ENCODE measurements at regions of chr6 and their contacts with region 1.

Region 1: DNA sequence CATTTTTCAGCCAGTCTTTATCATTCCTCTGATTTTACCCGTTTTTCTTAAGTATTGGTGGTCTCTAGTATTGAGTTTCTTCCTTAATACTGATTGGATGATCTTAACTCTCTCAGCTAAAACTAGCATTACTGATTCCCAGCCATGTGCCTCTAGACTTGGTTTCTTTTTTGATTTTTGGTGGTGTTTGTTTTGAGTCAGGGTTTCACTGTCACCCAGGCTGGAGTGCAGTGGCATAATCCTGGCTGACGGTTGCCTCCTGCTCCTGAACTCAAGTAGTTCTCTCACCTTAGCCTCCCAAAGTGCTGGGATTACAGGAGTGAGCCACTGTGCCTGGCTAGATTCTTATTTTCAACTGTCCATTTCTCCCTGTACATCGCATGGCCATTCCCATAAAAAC is 24.9 kb downstream of the DPPA5 start:
- DNase-seq: no peak
- ATAC-seq: no peak
- H3K4me3 ChIP-seq: no peak overlapping the region
- H3K4me3 Mint-ChIP-seq: no peak overlapping the region
- H3K27ac ChIP-seq: no peak overlapping the region
- H3K27ac Mint-ChIP-seq: no peak overlapping the region
- H3K4me1 ChIP-seq: no peaks in the 10 kb centered on the region
- H3K4me1 Mint-ChIP-seq: peaks cover 0 to 6% (median 0%) of the 10 kb centered on the region in 7 donors
- H3K27me3 ChIP-seq: no peaks in the 10 kb centered on the region
- H3K27me3 Mint-ChIP-seq: peaks cover 4 to 42% (median 19%) of the 10 kb centered on the region in 5 donors

Region 2: DNA sequence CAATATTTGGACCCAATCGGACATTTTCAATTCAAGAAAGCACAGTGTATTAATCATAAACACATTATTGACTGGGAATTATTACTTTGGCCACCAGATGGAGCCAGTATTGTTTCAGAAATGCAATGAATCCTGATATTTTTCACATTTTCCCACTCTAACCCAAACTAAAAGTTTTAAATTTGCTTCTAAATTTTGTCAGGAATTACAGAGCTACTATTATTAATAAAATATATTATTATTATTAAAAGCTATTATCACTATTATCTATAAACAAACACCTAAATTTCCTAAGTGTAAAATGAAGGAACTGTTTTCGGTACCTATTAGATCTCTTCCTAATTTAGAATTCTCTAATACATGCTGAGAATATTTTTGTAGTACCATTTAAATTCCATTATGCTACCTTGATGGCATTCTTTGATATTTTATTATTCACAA is 1795.2 kb before region 1 on chr6:
- CTCF ChIA-PET with region 1: no interaction called
- POLR2A ChIA-PET with region 1: no interaction called
- intact Hi-C with region 1: loop called in 1 of 2 experiments (anchors 10 kb)
- DNase-seq: no peak
- ATAC-seq: no peak
- H3K4me3 ChIP-seq: no peak overlapping the region
- H3K4me3 Mint-ChIP-seq: no peak overlapping the region
- H3K27ac ChIP-seq: no peak overlapping the region
- H3K27ac Mint-ChIP-seq: no peak overlapping the region
- H3K4me1 ChIP-seq: no peaks in the 10 kb centered on the region
- H3K4me1 Mint-ChIP-seq: no peaks in the 10 kb centered on the region
- H3K27me3 ChIP-seq: no peaks in the 10 kb centered on the region
- H3K27me3 Mint-ChIP-seq: peaks cover 0 to 12% (median 10%) of the 10 kb centered on the region in 5 donors

Region 3: GRCh38 chr6:72411872-72412708 is 917.1 kb before region 1 on chr6:
- CTCF ChIA-PET with region 1: interaction called, 4 read pairs
- POLR2A ChIA-PET with region 1: no interaction called
- intact Hi-C with region 1: loop called (anchors 1 kb)
- DNase-seq: peak; percentile 61 to 93 (median 79)
- ATAC-seq: peak; percentile 99
- H3K4me3 ChIP-seq: no peak overlapping the region
- H3K4me3 Mint-ChIP-seq: no peak overlapping the region
- H3K27ac ChIP-seq: no peak overlapping the region
- H3K27ac Mint-ChIP-seq: peak overlapping the region in 2 of 9 donors; percentile 15 to 28
- H3K4me1 ChIP-seq: no peaks in the 10 kb centered on the region
- H3K4me1 Mint-ChIP-seq: peaks cover 0 to 2% (median 0%) of the 10 kb centered on the region in 7 donors
- H3K27me3 ChIP-seq: no peaks in the 10 kb centered on the region
- H3K27me3 Mint-ChIP-seq: peaks cover 0 to 13% (median 0%) of the 10 kb centered on the region in 5 donors

Region 4: DNA sequence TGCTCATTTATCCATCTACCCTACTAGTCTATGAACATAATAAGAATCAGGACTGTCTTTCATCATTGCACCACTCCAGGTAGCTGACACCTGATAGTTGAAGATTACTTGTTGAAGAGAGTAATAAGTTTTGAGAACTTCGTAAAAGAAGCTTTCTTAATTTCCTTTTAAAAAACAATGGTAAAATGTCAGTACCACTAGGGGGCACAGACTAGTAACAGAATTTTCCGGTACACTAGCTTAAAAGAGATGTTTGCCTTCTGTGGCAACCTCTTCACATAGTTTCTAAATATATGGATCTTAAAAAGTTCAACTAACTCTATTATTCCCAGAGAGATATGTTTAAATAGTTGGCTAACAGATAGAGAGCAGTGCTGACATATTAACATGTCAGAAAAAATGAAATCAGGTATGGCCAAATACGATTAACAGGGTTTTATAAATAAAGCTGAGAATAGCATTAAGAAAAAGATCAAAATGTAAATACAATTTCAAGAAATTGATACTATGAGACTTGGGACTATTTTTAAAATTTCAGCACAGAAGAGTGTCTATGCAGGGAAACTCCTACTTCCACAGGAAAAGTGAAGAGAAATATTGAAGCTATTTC is 712.7 kb before region 1 on chr6:
- CTCF ChIA-PET with region 1: interaction called, 7 read pairs
- POLR2A ChIA-PET with region 1: interaction called, 4 read pairs
- intact Hi-C with region 1: loop called (anchors 1 to 5 kb)
- DNase-seq: peak in 5 of 9 donors; percentile 40 to 58 (median 49)
- ATAC-seq: no peak
- H3K4me3 ChIP-seq: no peak overlapping the region
- H3K4me3 Mint-ChIP-seq: peak overlapping the region in 4 of 10 donors; percentile 12 to 32 (median 22)
- H3K27ac ChIP-seq: no peak overlapping the region
- H3K27ac Mint-ChIP-seq: peak overlapping the region in 7 of 9 donors; percentile 37 to 80 (median 71)
- H3K4me1 ChIP-seq: peaks cover 18 to 21% of the 10 kb centered on the region in 2 donors
- H3K4me1 Mint-ChIP-seq: peaks cover 23 to 70% (median 52%) of the 10 kb centered on the region in 7 donors
- H3K27me3 ChIP-seq: no peaks in the 10 kb centered on the region
- H3K27me3 Mint-ChIP-seq: no peaks in the 10 kb centered on the region

Region 5: DNA sequence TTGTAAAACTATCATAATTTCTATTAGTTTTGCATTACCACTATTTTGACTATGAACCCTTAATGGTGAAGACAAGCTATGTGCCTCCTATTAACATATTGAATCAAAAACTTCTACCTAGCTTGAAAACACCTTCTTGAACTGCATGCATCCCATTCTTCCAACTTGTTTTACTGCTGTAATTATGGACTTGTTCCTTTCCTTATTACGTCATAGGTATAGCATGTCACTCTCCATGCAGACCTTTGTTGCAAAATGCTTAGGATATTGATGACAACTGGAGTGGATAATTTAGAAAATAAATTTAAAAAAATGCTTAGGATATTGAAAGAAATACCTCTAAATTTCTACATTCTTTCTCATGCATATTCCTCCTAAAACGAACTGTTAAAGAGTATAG is 488.0 kb before region 1 on chr6:
- CTCF ChIA-PET with region 1: no interaction called
- POLR2A ChIA-PET with region 1: no interaction called
- intact Hi-C with region 1: no loop called
- DNase-seq: no peak
- ATAC-seq: no peak
- H3K4me3 ChIP-seq: no peak overlapping the region
- H3K4me3 Mint-ChIP-seq: no peak overlapping the region
- H3K27ac ChIP-seq: no peak overlapping the region
- H3K27ac Mint-ChIP-seq: no peak overlapping the region
- H3K4me1 ChIP-seq: no peaks in the 10 kb centered on the region
- H3K4me1 Mint-ChIP-seq: peaks cover 0 to 5% (median 0%) of the 10 kb centered on the region in 7 donors
- H3K27me3 ChIP-seq: no peaks in the 10 kb centered on the region
- H3K27me3 Mint-ChIP-seq: no peaks in the 10 kb centered on the region

Region 6: DNA sequence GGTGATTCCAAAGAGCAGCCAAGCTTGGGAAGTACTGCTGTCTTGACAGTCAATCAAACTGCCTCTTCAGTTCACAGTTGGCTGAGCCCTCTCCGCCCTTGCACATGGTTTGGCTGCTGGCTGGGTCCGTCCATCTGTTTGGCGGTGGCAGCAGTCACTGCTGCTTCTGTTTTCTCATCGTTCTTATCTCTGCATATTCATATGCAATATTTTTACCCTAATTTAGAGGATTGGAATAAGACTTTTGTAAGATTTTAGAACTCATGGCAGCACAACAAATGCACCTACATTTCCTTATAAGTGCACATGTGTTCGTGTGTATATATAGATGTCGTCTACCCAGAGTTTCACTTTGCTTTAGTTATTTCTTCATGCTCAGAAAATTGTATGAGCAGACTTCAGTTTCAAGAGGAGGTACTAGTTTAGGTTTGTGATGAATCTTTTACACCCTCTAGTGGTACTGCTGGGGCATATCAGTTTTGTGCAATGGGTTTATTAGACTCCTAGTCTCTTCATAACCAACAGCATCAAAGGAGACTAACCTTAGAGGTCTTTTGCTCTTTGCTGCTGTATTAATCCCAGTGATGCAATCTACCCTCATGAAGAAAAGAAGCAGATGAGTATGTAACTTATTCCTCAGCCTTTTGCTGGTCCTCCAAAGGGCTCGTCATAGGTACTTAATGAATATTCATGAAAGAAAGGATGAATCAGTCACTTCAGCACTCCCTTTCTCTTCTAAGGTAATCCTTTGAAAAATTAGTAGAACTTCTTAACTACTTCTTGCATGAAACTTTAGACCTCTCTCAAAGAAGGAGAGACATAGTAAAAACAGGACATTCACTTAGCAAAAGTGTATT is 148.2 kb before region 1 on chr6:
- CTCF ChIA-PET with region 1: no interaction called
- POLR2A ChIA-PET with region 1: no interaction called
- intact Hi-C with region 1: loop called (anchors 1 kb)
- DNase-seq: peak in 6 of 9 donors; percentile 29 to 62 (median 44)
- ATAC-seq: peak; percentile 92
- H3K4me3 ChIP-seq: no peak overlapping the region
- H3K4me3 Mint-ChIP-seq: peak overlapping the region in 9 of 10 donors; percentile 12 to 69 (median 47)
- H3K27ac ChIP-seq: no peak overlapping the region
- H3K27ac Mint-ChIP-seq: peak overlapping the region in 1 of 9 donors; percentile 17
- H3K4me1 ChIP-seq: no peaks in the 10 kb centered on the region
- H3K4me1 Mint-ChIP-seq: peaks cover 4 to 11% (median 5%) of the 10 kb centered on the region in 7 donors
- H3K27me3 ChIP-seq: no peaks in the 10 kb centered on the region
- H3K27me3 Mint-ChIP-seq: no peaks in the 10 kb centered on the region

Region 7: DNA sequence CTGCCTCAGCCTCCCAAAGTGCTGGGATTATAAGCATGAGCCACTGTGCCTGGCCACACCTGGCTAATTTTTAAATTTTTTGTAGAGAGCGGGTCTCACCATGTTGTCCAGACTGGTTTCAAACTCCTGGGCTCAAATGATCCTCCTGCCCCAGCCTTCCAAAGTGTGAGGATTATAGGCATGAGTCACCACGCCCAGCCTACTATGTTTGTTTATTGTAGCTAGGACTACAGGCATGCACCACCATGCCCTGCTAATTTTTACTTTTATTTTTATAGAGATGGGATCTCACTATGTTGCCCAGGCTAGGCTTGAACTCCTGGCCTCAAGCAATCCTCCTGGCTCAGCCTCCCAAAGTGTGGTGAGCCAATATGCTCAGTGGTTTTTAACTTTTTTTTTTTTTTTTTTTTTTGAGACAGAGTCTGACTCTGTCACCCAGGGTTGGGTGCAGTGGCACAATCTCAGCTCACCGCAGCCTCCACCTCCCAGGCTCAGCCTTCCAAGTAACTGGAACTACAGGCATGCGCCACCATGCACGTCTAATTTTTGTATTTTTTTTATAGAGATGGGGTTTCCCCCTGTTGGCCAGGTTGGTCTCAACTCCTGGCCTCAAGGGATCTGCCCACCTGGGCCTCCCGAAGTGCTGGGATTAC is 53.4 kb after region 1 on chr6:
- CTCF ChIA-PET with region 1: no interaction called
- POLR2A ChIA-PET with region 1: no interaction called
- intact Hi-C with region 1: no loop called
- DNase-seq: no peak
- ATAC-seq: no peak
- H3K4me3 ChIP-seq: no peak overlapping the region
- H3K4me3 Mint-ChIP-seq: no peak overlapping the region
- H3K27ac ChIP-seq: no peak overlapping the region
- H3K27ac Mint-ChIP-seq: no peak overlapping the region
- H3K4me1 ChIP-seq: no peaks in the 10 kb centered on the region
- H3K4me1 Mint-ChIP-seq: peaks cover 0 to 7% (median 0%) of the 10 kb centered on the region in 7 donors
- H3K27me3 ChIP-seq: no peaks in the 10 kb centered on the region
- H3K27me3 Mint-ChIP-seq: peaks cover 0 to 5% (median 0%) of the 10 kb centered on the region in 5 donors

Region 8: DNA sequence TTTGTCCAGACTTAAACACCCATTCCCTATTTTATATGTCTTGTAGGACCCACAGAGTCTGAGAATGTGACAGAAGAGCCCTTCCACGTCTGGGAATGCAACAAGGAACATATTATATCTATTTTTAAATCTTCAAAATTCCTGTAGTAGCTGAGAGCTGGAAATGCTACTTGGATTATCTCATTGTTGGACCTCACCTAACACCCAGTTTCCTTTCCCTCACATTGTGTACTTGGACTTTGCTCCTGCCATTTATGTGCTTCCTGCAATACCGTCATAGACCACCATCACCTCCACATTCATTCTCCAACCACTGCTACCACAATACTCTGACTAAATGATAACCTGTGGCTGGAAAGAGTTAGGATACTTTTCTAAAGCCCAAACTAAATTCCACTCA is 1541.2 kb after region 1 on chr6:
- CTCF ChIA-PET with region 1: no interaction called
- POLR2A ChIA-PET with region 1: no interaction called
- intact Hi-C with region 1: no loop called
- DNase-seq: no peak
- ATAC-seq: no peak
- H3K4me3 ChIP-seq: no peak overlapping the region
- H3K4me3 Mint-ChIP-seq: no peak overlapping the region
- H3K27ac ChIP-seq: no peak overlapping the region
- H3K27ac Mint-ChIP-seq: no peak overlapping the region
- H3K4me1 ChIP-seq: no peaks in the 10 kb centered on the region
- H3K4me1 Mint-ChIP-seq: no peaks in the 10 kb centered on the region
- H3K27me3 ChIP-seq: no peaks in the 10 kb centered on the region
- H3K27me3 Mint-ChIP-seq: no peaks in the 10 kb centered on the region